A549 (cell line): ENCODE measurements at regions of chr19 and their contacts with region 1.

Region 1: GRCh38 chr19:37906869-37907734 is at the start of gene SIPA1L3:
- DNase-seq: peak; percentile 99
- ATAC-seq: peak; percentile 91 to 97
- H3K4me3 ChIP-seq: peak within 1 kb of the TSS; percentile 69
- H3K27ac ChIP-seq: peak within 1 kb of the TSS; percentile 83 to 87
- H3K4me1 ChIP-seq: peaks cover 30% of the 10 kb centered on the region
- CTCF ChIP-seq: no peak; the same call in 2 of the 3 replicates
- EP300 ChIP-seq: no peak; a peak in 1 of 5 replicates
- POLR2A ChIP-seq: peak; percentile 74
- RAD21 ChIP-seq: peak; percentile 16 to 45
- polyA plus RNA-seq, gene SIPA1L3: 28.9 and 47.8 TPM in 2 replicates

Region 2: GRCh38 chr19:37874784-37875183 is 32.3 kb before region 1 on chr19:
- CTCF ChIA-PET with region 1: interaction called, 15 read pairs
- POLR2A ChIA-PET with region 1: no interaction called
- DNase-seq: no peak
- ATAC-seq: peak in 1 of 2 experiments; percentile 54; a peak in 3 of 6 replicates
- H3K4me3 ChIP-seq: no peak overlapping the region
- H3K27ac ChIP-seq: no peak overlapping the region
- H3K4me1 ChIP-seq: no peaks in the 10 kb centered on the region
- CTCF ChIP-seq: no peak
- EP300 ChIP-seq: no peak
- POLR2A ChIP-seq: no peak
- RAD21 ChIP-seq: no peak

Region 3: DNA sequence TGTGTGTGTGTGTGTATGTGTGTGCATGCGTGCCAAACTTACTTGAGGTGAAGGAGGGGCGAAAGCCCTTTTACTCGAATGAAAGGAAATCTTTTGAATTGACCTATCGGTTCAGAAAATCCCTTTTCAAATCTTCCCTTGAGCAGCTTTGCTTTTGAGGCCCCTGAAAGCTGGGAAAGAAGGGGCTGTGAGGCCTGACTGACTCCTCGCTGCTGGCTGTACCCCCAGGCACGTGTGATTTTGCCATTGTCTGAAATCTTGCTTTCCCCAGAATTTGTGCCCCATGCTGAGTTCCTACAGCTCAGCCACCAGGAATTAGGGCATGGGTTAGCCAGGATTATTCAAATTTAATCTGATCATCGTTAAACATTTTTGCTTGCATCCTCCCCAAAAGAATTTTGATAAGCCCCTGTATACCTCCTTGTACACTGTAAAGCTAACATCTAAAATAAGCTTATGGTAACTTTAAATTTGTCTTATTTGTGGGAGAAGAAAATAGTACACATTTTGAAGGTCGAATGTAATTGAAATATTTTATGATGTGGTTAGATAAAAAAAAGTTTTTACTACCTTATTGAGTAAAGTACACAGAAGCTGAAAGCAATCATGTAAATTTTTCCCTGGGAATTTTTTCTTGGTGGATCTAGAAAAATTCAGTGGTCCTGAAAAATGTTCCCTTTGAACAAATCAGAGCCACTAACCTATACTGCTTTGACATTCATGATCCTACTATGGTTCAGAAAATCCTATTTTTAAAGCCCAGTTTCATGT is 46.6 kb after region 1 on chr19:
- CTCF ChIA-PET with region 1: interaction called, 40 read pairs
- POLR2A ChIA-PET with region 1: no interaction called
- DNase-seq: no peak
- ATAC-seq: peak in 1 of 2 experiments; percentile 8; a peak in 2 of 6 replicates
- H3K4me3 ChIP-seq: no peak overlapping the region
- H3K27ac ChIP-seq: peak overlapping the region; percentile 2 to 46; a peak in 4 of 6 replicates
- H3K4me1 ChIP-seq: peaks cover 49% of the 10 kb centered on the region
- CTCF ChIP-seq: no peak
- EP300 ChIP-seq: no peak
- POLR2A ChIP-seq: no peak
- RAD21 ChIP-seq: no peak

Region 4: DNA sequence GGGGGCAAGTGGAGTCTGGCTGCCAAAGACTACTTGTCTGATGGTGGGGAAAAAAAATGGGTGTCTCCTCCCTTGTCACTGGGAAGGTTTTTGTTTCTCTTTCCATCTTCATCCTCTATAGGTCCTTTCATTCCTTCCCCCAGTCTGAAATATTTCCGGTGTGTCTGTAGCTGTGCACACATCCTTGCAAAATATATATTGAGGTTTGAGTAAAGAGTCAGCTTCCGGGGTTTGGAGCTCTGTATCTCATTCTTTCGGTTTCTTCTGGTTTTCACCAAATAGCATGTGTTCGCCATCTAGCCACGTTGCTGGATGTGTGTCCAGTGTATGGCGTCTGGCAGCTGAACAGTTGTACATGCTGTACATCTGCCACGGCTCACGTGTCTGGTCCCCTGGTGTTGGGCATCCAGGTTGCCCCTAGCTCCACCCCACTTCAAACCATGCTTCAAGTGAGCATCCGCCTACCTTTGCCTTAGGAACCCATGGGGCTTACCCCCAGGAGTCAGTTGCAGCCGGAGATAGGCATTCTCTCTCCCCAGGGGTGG is 142.1 kb after region 1 on chr19:
- CTCF ChIA-PET with region 1: interaction called, 316 read pairs
- POLR2A ChIA-PET with region 1: no interaction called
- DNase-seq: no peak
- ATAC-seq: 0 out of 6 replicates have a peak, but pooled peaks of 1 of the 2 experiments have one; percentile 25
- H3K4me3 ChIP-seq: no peak overlapping the region
- H3K27ac ChIP-seq: no peak overlapping the region
- H3K4me1 ChIP-seq: no peaks in the 10 kb centered on the region
- CTCF ChIP-seq: no peak
- EP300 ChIP-seq: no peak
- POLR2A ChIP-seq: no peak
- RAD21 ChIP-seq: no peak

Region 5: DNA sequence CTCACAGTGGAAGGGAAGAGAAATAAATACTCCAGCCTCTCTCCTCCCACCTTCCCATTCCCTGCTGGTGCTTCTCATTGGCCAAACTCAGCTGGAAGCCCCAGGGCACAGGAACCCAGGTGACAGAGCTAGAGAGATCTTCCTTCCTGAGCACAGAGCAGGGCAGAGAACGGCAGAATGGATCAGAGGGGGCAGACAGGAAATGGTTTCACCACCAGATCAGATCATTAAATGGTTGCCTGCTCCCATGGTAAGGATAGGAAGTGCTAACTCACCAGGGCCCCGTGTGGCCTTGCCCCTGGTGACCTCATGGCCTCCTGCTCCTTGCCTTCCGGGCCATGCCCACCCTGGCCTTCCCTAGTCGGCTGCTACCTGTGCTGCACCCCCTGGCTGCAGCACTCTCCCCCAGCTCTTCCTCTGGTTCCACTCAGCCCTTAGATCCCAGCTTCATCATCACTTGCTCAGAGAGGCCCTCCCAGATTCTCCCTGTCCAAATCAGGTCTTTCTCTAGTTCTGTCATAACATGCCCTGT is 208.2 kb after region 1 on chr19:
- CTCF ChIA-PET with region 1: interaction called, 70 read pairs
- POLR2A ChIA-PET with region 1: interaction called, 3 read pairs
- DNase-seq: no peak
- ATAC-seq: peak; percentile 19 to 31; a peak in 3 of 6 replicates
- H3K4me3 ChIP-seq: no peak overlapping the region
- H3K27ac ChIP-seq: no peak overlapping the region
- H3K4me1 ChIP-seq: no peaks in the 10 kb centered on the region
- CTCF ChIP-seq: no peak
- EP300 ChIP-seq: no peak
- POLR2A ChIP-seq: no peak
- RAD21 ChIP-seq: no peak

Region 6: DNA sequence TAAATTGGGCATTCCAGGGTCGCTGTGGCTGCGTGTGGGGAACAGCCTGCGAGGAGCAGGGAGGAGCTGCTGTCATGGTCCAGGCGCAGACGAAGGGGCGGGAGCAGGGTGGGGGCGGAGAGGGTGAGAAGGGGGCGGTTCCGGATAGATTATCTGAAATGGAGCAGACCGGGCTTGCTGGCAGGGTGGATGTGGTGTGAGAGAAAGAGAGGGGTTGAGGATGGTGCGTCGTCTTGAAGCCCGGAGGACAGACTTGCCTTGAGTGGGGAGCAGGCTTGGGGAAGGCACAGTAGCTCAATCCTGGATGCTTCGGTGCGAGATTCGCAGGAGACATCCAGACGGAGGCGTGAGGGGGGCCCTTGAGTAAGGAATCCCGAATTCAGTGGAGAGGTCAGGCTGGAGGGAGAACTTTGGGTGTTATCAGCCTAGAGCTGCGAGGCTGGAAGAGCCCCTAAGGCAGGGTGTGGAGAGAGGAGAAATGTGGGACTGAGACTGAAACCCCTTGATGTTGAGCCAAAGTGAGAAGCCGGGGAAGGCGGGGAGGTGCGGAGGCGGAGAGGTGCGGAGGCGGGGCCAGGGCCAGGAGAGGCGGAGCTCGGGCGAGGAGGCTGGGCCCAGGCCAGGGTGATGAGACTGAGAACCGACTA is 276.3 kb after region 1 on chr19:
- CTCF ChIA-PET with region 1: interaction called, 21 read pairs
- POLR2A ChIA-PET with region 1: no interaction called
- DNase-seq: no peak
- ATAC-seq: peak; percentile 54 to 69; a peak in 5 of 6 replicates
- H3K4me3 ChIP-seq: no peak overlapping the region
- H3K27ac ChIP-seq: no peak overlapping the region
- H3K4me1 ChIP-seq: no peaks in the 10 kb centered on the region
- CTCF ChIP-seq: no peak
- EP300 ChIP-seq: no peak
- POLR2A ChIP-seq: no peak
- RAD21 ChIP-seq: no peak

Region 7: GRCh38 chr19:38245826-38246498 is 338.9 kb after region 1 on chr19:
- CTCF ChIA-PET with region 1: interaction called, 32 read pairs
- POLR2A ChIA-PET with region 1: no interaction called
- DNase-seq: no peak
- ATAC-seq: no peak
- H3K4me3 ChIP-seq: no peak overlapping the region
- H3K27ac ChIP-seq: no peak overlapping the region
- H3K4me1 ChIP-seq: peaks cover 3% of the 10 kb centered on the region; the same call in 2 of the 3 replicates
- CTCF ChIP-seq: no peak
- EP300 ChIP-seq: no peak
- POLR2A ChIP-seq: no peak
- RAD21 ChIP-seq: no peak